ENCODE measurements at regions of chr1 and their contacts with region 1.

Region 1: DNA sequence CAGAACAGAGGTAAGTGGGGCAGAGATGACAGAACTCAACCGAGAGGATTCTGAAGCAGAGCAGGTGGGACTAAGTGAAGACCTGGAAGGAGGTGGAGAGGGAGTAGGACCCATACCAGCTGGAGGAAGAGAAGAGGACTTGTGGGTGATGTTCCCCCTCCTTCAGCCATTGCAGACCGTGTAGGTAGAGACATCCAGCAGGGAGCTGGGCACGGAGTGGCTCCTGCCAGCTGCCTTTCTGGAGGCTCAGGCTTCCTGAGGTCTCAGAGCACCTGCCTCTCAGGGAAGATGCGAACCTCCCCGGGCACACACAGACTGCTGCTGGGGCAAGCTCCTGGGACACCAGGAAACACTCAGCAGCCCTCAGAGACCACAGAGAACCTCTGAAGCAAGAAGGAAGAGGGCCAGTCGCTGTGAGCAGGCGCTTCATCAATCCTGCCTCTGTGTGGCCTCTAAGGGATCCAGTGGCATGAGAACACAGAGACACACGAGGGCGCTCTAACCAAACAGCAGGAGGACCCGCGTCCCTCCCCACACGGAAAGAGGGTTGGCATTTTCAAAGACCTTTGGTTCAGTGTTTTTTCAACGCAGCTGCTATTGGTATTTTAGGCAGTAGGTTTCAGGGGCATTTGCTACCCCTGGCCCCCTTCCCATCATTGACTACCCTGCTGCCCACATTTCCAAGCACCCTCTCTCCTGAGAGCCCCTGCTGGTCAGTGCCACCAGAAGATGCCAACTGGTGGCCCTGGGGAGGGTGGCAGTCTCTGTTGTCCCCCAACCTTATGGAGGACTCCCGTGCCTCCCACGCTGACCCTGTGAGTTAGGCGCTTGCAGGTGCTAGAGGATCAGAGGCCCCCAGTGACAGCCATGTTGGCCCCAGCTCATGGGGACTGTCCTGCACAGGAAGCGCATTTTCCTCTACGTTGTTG is 89.6 kb upstream of the EDN2 start:
- DNase-seq: peak; percentile 93
- ATAC-seq: peak; percentile 99
- H3K4me3 Mint-ChIP-seq: no peak overlapping the region
- H3K27ac Mint-ChIP-seq: no peak overlapping the region
- H3K4me1 Mint-ChIP-seq: peaks cover 26% of the 10 kb centered on the region
- H3K27me3 Mint-ChIP-seq: no peaks in the 10 kb centered on the region

Region 2: GRCh38 chr1:41653574-41653973 is 79.5 kb after region 1 on chr1:
- CTCF ChIA-PET with region 1: interaction called, 31 read pairs
- POLR2A ChIA-PET with region 1: no interaction called
- DNase-seq: no peak
- ATAC-seq: no peak
- H3K4me3 Mint-ChIP-seq: no peak overlapping the region
- H3K27ac Mint-ChIP-seq: no peak overlapping the region
- H3K4me1 Mint-ChIP-seq: peaks cover 65% of the 10 kb centered on the region
- H3K27me3 Mint-ChIP-seq: no peaks in the 10 kb centered on the region

Region 3: GRCh38 chr1:41662061-41662764 is 88.2 kb after region 1 on chr1:
- CTCF ChIA-PET with region 1: interaction called, 31 read pairs
- POLR2A ChIA-PET with region 1: no interaction called
- DNase-seq: peak; percentile 84
- ATAC-seq: peak; percentile 88
- H3K4me3 Mint-ChIP-seq: peak overlapping the region; percentile 47
- H3K27ac Mint-ChIP-seq: peak overlapping the region; percentile 21
- H3K4me1 Mint-ChIP-seq: peaks cover 82% of the 10 kb centered on the region
- H3K27me3 Mint-ChIP-seq: no peaks in the 10 kb centered on the region

Region 4: GRCh38 chr1:41751804-41752513 is 177.9 kb after region 1 on chr1:
- CTCF ChIA-PET with region 1: interaction called, 11 read pairs
- POLR2A ChIA-PET with region 1: no interaction called
- DNase-seq: no peak
- ATAC-seq: no peak
- H3K4me3 Mint-ChIP-seq: no peak overlapping the region
- H3K27ac Mint-ChIP-seq: peak overlapping the region; percentile 83
- H3K4me1 Mint-ChIP-seq: peaks cover 67% of the 10 kb centered on the region
- H3K27me3 Mint-ChIP-seq: no peaks in the 10 kb centered on the region

Region 5: DNA sequence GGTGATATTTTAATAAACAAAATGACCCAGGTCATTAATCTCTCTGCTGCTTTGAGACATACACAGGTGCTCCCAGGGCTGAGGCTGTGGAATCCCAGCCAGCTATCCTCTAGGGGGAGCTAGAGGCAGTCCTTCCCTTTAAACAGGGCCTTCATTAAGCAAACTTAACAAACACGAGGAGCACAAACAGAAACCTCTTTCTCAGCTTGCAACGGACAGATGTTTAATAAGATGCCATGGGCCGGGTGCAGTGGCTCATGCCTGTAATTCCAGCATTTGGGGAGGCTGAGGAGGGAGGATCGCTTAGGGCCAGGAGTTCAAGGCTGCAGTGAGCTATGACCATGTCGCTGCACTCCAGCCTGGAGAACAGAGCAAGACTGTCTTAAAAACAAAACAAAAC is 238.0 kb after region 1 on chr1:
- CTCF ChIA-PET with region 1: interaction called, 26 read pairs
- POLR2A ChIA-PET with region 1: no interaction called
- DNase-seq: peak; percentile 75
- ATAC-seq: peak; percentile 50
- H3K4me3 Mint-ChIP-seq: no peak overlapping the region
- H3K27ac Mint-ChIP-seq: peak overlapping the region; percentile 1
- H3K4me1 Mint-ChIP-seq: peaks cover 41% of the 10 kb centered on the region
- H3K27me3 Mint-ChIP-seq: peaks cover under 1% of the 10 kb centered on the region

Region 6: DNA sequence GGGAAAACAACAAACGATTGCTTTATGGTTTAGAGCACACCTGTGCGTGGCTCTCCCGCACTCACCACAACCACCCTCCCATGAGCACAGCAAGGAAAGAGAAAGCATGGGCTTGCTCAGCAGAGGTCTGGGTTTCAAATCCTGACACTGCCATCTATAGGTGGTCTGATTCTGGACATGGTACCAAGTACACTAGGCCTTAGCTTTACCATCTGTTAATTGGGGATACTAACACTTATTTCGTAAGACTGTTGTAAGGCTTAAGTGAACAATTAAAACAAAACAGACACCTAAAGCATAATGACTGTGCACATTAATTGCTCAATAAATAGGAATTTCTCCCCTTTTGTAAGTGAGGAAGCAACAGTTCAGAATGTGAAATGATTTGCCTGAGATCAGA is 294.6 kb after region 1 on chr1:
- CTCF ChIA-PET with region 1: interaction called, 19 read pairs
- POLR2A ChIA-PET with region 1: no interaction called
- DNase-seq: peak; percentile 64
- ATAC-seq: peak; percentile 97
- H3K4me3 Mint-ChIP-seq: no peak overlapping the region
- H3K27ac Mint-ChIP-seq: no peak overlapping the region
- H3K4me1 Mint-ChIP-seq: peaks cover 19% of the 10 kb centered on the region
- H3K27me3 Mint-ChIP-seq: peaks cover 1% of the 10 kb centered on the region

Measured in activated CD8-positive, alpha-beta T cell treated with anti-CD3 and anti-CD28 coated beads, Interleukin-2, amount 10 ng/mL, durations not matched to agents 7 days and 5 days (primary cell).